Left lung (tissue), 14 donors: ENCODE measurements at regions of chr5 and their contacts with region 1.

Region 1: GRCh38 chr5:140362860-140363630 is 3.1 kb downstream of the SLC4A9 start:
- DNase-seq: peak; percentile 51 to 96 (median 78)
- ATAC-seq: peak; percentile 92
- H3K4me3 ChIP-seq: no peak overlapping the region
- H3K27ac ChIP-seq: no peak overlapping the region
- H3K4me1 ChIP-seq: peaks cover 0 to 8% of the 10 kb centered on the region in 2 donors
- H3K27me3 ChIP-seq: no peaks in the 10 kb centered on the region
- CTCF ChIP-seq: peak; percentile 86 to 97

Region 2: GRCh38 chr5:139430015-139430414 is 933.0 kb before region 1 on chr5:
- intact Hi-C with region 1: no loop called
- DNase-seq: no peak
- ATAC-seq: no peak
- H3K4me3 ChIP-seq: no peak overlapping the region
- H3K27ac ChIP-seq: no peak overlapping the region
- H3K4me1 ChIP-seq: no peaks in the 10 kb centered on the region
- H3K27me3 ChIP-seq: no peaks in the 10 kb centered on the region
- CTCF ChIP-seq: no peak

Region 3: DNA sequence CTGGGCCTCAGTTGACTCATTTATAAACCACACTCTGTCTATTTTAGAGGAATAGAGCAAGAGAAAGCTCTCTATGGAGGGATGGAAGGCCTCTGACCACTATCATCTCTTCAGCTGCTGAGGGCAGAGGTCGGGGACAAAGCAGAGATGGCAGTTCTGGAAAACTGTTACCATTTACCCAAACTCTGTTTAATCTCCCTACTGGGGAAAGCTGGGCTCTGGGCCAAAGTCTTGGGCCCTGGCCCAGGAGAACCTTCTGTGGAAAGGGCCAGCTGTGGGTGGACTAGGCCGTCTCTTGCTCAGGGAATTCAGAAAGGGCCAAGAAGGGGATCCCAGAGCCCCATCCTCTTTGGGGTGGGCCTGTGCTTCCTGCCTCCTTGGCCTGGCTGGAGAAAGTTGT is 467.4 kb before region 1 on chr5:
- intact Hi-C with region 1: no loop called
- DNase-seq: peak in 2 of 4 donors; percentile 41 to 66
- ATAC-seq: no peak
- H3K4me3 ChIP-seq: no peak overlapping the region
- H3K27ac ChIP-seq: no peak overlapping the region
- H3K4me1 ChIP-seq: no peaks in the 10 kb centered on the region
- H3K27me3 ChIP-seq: peaks cover 0 to 2% of the 10 kb centered on the region in 2 donors
- CTCF ChIP-seq: no peak

Region 4: DNA sequence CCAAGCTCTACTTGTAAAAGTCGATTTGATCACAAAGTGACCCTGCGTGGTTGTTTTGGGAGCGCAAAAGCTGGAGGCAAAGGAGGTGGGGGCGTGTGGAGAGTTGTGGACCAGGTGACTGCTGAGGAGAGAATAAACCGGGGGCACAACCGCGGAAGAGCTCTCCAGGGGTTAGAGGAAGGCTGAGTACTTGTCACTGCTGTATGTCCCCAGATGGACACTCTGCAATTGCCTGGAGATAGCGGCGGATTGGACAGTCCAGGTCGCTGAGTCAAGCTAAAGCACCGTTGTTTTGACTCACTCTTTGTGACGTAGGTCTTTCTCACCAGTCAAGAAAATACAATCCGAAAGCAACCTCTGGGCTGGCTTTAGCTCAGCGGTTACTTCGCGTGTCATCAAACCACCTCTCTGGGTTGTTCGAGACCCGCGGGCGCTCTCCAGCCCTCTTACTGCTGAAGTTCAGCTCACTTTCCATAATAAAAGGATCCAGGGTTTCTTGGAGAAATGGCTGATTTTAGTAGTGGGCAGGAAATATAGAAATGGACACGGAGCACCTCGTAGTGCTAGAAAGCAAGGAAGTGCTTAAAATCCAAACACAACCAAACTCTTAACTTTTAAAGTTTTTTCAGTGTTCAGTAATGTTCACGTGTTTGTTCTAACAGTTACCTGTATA is 362.9 kb after region 1 on chr5:
- intact Hi-C with region 1: loop called in 1 of 2 experiments (anchors 10 kb)
- DNase-seq: peak; percentile 13 to 79 (median 40)
- ATAC-seq: peak; percentile 91
- H3K4me3 ChIP-seq: no peak overlapping the region
- H3K27ac ChIP-seq: no peak overlapping the region
- H3K4me1 ChIP-seq: peaks cover 0 to 4% of the 10 kb centered on the region in 2 donors
- H3K27me3 ChIP-seq: peaks cover 0 to 63% of the 10 kb centered on the region in 2 donors
- CTCF ChIP-seq: no peak